ENCODE measurements at regions of chr10 and their contacts with region 1.

Region 1: DNA sequence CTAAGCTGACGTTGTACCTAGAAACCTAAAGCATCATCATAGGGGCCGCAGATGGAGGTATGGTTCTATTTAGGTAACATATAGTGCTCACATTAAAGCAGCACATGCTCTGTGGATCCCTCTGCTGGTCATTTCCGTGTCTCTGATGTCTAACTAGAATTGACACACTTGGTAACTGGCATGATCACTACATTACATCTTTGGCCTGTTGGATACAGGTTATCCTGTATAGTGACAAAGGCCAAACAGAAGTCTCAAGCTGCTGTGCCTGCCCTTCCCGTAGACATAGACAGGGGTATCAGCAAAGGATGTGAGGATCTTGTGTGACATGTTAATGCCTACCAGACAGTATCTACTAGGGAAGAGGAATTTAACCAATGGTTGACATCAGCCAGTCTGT is 51.2 kb downstream of the KIF5B start:
- DNase-seq: no peak
- ATAC-seq: peak; percentile 54
- H3K4me3 Mint-ChIP-seq: no peak overlapping the region
- H3K27ac Mint-ChIP-seq: no peak overlapping the region
- H3K4me1 Mint-ChIP-seq: peaks cover 2% of the 10 kb centered on the region
- H3K27me3 Mint-ChIP-seq: no peaks in the 10 kb centered on the region
- CTCF ChIP-seq: no peak

Region 2: DNA sequence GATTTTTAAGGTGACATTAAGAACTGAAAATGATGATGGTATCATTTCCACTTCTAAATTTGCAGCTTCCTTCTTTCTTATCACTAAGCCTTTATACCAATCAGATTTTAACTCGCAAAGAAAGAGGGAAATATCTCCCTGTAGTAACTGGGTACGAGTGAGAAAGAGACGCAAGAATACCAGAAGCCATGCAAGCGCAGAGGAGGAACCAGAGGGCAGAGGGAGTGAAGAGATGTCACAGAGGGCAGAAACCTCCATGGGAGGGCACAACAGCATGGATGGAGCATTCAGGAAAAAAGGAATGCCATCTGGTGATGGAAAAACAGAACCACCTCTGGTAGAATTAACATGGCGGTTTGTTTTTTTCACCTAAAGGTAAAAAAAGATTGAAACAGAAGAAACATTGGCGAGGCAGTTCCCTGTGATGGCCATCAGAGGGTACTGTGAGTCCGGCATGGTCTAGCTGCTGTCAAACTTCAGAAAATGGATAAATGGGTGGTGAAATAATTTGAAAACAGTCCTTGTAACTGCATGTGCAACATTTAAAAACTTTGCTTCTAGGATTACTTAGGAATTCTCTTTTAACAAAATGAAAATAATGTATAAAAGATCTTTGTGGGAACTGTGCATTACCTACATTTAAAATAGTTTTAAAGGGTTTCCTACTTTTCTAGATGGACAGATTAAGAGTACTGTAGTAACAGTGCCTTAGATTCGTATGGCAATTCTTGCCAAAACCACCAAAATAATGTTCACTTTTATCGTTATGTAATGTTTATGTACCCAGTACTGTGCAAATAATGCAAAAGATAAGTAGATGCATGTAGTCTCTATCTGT is 168.3 kb before region 1 on chr10:
- CTCF ChIA-PET with region 1: interaction called, 4 read pairs
- POLR2A ChIA-PET with region 1: no interaction called
- intact Hi-C with region 1: loop called (anchors 1 kb)
- DNase-seq: no peak
- ATAC-seq: peak; percentile 62
- H3K4me3 Mint-ChIP-seq: no peak overlapping the region
- H3K27ac Mint-ChIP-seq: no peak overlapping the region
- H3K4me1 Mint-ChIP-seq: peaks cover 8% of the 10 kb centered on the region
- H3K27me3 Mint-ChIP-seq: no peaks in the 10 kb centered on the region
- CTCF ChIP-seq: no peak

Region 3: DNA sequence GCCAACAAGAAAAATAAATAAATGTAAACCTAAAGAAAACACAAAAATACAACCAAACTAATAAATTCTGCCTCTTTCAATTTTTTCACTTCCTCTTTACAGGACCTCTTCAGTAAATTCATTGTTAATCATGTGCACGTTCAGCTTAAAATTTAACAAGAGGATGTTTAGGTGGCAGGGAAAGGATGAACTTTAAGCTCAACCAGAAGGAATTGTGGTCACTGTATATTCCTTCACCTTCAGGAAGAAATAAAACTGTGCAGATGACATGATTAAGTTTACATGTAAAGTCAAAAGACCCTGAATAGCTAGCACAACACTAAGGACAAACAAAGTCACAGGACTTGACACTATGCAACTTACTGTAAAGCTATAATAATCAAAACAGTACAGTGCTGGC is 18.2 kb after region 1 on chr10:
- CTCF ChIA-PET with region 1: no interaction called
- POLR2A ChIA-PET with region 1: no interaction called
- intact Hi-C with region 1: no loop called
- DNase-seq: no peak
- ATAC-seq: no peak
- H3K4me3 Mint-ChIP-seq: no peak overlapping the region
- H3K27ac Mint-ChIP-seq: no peak overlapping the region
- H3K4me1 Mint-ChIP-seq: peaks cover 10% of the 10 kb centered on the region
- H3K27me3 Mint-ChIP-seq: no peaks in the 10 kb centered on the region
- CTCF ChIP-seq: no peak

Measured in activated B cell treated with CpG ODN at 0.5 μM for 24 hours (primary cell).